Endothelial cell of umbilical vein (primary cell): ENCODE measurements at regions of chr2 and their contacts with region 1.

Region 1: GRCh38 chr2:69816923-69817542 is 12.4 kb upstream of the GMCL1 start:
- DNase-seq: peak; percentile 88
- H3K4me3 ChIP-seq: no peak overlapping the region
- H3K27ac ChIP-seq: no peak overlapping the region
- H3K4me1 ChIP-seq: peaks cover 28% of the 10 kb centered on the region
- H3K27me3 ChIP-seq: no peaks in the 10 kb centered on the region
- CTCF ChIP-seq: peak; percentile 71 to 72
- POLR2A ChIP-seq: no peak

Region 2: GRCh38 chr2:69559442-69560146 is 257.4 kb before region 1 on chr2:
- CTCF ChIA-PET with region 1: interaction called, 15 read pairs
- POLR2A ChIA-PET with region 1: no interaction called
- dilution Hi-C with region 1: no loop called
- intact Hi-C with region 1: loop called (anchors 5 kb)
- DNase-seq: peak; percentile 69
- H3K4me3 ChIP-seq: no peak overlapping the region
- H3K27ac ChIP-seq: no peak overlapping the region
- H3K4me1 ChIP-seq: peaks cover 21% of the 10 kb centered on the region
- H3K27me3 ChIP-seq: no peaks in the 10 kb centered on the region
- CTCF ChIP-seq: peak; percentile 50 to 51
- POLR2A ChIP-seq: no peak

Region 3: DNA sequence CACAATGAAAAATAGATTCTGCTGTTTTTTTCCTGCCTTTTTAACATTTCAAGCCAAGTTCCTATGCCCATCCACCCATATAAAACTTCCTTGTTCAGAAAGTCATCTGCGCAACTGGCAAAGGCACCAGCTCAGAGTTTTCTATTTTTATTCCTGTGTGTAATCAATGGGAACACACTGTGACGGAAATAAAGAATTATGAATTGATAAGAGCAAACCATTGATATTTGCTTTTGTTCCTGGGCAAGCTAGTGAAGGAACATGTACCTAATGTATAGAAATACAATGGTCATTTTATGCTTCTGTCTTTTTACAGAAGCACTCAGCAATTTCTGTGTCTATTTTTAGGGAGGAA is 142.7 kb before region 1 on chr2:
- CTCF ChIA-PET with region 1: no interaction called
- POLR2A ChIA-PET with region 1: no interaction called
- dilution Hi-C with region 1: no loop called
- intact Hi-C with region 1: no loop called
- DNase-seq: peak; percentile 51
- H3K4me3 ChIP-seq: no peak overlapping the region
- H3K27ac ChIP-seq: peak overlapping the region; percentile 15
- H3K4me1 ChIP-seq: peaks cover 20% of the 10 kb centered on the region
- H3K27me3 ChIP-seq: no peaks in the 10 kb centered on the region
- CTCF ChIP-seq: no peak
- POLR2A ChIP-seq: no peak

Region 4: GRCh38 chr2:69741619-69742466 is 75.2 kb before region 1 on chr2 and contains the start of gene ANXA4:
- CTCF ChIA-PET with region 1: interaction called, 90 read pairs
- POLR2A ChIA-PET with region 1: no interaction called
- dilution Hi-C with region 1: no loop called
- intact Hi-C with region 1: loop called (anchors 1 kb)
- DNase-seq: peak; percentile 48
- H3K4me3 ChIP-seq: peak within 1 kb of the TSS; percentile 56 to 79 (median 75)
- H3K27ac ChIP-seq: peak within 1 kb of the TSS; percentile 30
- H3K4me1 ChIP-seq: peaks cover 9% of the 10 kb centered on the region
- H3K27me3 ChIP-seq: no peaks in the 10 kb centered on the region
- CTCF ChIP-seq: no peak
- POLR2A ChIP-seq: no peak
- total RNA-seq, gene ANXA4: 70.8 and 79.6 TPM in 2 replicates

Region 5: GRCh38 chr2:69767034-69767433 is 50.0 kb before region 1 on chr2:
- CTCF ChIA-PET with region 1: interaction called, 21 read pairs
- POLR2A ChIA-PET with region 1: no interaction called
- dilution Hi-C with region 1: no loop called
- intact Hi-C with region 1: no loop called
- DNase-seq: no peak
- H3K4me3 ChIP-seq: no peak overlapping the region
- H3K27ac ChIP-seq: no peak overlapping the region
- H3K4me1 ChIP-seq: peaks cover 5% of the 10 kb centered on the region
- H3K27me3 ChIP-seq: no peaks in the 10 kb centered on the region
- CTCF ChIP-seq: no peak
- POLR2A ChIP-seq: no peak

Region 6: DNA sequence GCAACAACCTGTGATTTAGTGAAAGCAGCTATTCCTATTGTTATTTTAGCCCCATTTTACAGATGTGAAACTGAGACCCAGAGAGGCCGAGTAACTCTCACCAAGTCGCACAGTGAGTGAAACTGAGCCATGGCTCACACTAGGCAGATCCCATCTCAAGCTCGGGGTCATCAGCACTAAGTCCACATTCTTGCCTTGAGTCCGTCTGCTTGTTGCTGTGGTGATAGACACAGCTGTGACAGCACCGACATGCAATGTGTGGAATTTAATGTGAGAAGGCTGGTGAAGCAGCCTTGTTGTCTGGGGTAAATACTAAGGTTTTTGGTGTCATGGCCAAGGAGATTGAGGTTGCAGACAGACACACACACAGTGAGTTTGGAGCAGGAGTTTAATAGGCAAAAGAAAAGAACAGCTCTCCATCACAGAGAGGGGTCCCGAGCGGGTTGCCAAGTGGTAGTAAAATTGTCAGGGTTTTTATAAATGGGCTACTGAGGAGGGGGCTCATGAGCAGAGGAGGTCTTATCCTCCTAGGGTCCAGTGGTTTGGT is 27.8 kb before region 1 on chr2:
- CTCF ChIA-PET with region 1: interaction called, 25 read pairs
- POLR2A ChIA-PET with region 1: no interaction called
- dilution Hi-C with region 1: no loop called
- intact Hi-C with region 1: no loop called
- DNase-seq: no peak
- H3K4me3 ChIP-seq: no peak overlapping the region
- H3K27ac ChIP-seq: no peak overlapping the region
- H3K4me1 ChIP-seq: no peaks in the 10 kb centered on the region
- H3K27me3 ChIP-seq: no peaks in the 10 kb centered on the region
- CTCF ChIP-seq: no peak
- POLR2A ChIP-seq: no peak

Region 7: GRCh38 chr2:69829256-69830046 is 12.4 kb after region 1 on chr2 and contains the start of gene GMCL1:
- CTCF ChIA-PET with region 1: interaction called, 70 read pairs
- POLR2A ChIA-PET with region 1: no interaction called
- dilution Hi-C with region 1: no loop called
- intact Hi-C with region 1: no loop called
- DNase-seq: peak; percentile 98
- H3K4me3 ChIP-seq: peak within 1 kb of the TSS; percentile 43 to 70 (median 66)
- H3K27ac ChIP-seq: peak within 1 kb of the TSS; percentile 81
- H3K4me1 ChIP-seq: peaks cover 7% of the 10 kb centered on the region
- H3K27me3 ChIP-seq: no peaks in the 10 kb centered on the region
- CTCF ChIP-seq: no peak
- POLR2A ChIP-seq: peak; percentile 90
- total RNA-seq, gene GMCL1: 13.0 and 14.6 TPM in 2 replicates

Region 8: DNA sequence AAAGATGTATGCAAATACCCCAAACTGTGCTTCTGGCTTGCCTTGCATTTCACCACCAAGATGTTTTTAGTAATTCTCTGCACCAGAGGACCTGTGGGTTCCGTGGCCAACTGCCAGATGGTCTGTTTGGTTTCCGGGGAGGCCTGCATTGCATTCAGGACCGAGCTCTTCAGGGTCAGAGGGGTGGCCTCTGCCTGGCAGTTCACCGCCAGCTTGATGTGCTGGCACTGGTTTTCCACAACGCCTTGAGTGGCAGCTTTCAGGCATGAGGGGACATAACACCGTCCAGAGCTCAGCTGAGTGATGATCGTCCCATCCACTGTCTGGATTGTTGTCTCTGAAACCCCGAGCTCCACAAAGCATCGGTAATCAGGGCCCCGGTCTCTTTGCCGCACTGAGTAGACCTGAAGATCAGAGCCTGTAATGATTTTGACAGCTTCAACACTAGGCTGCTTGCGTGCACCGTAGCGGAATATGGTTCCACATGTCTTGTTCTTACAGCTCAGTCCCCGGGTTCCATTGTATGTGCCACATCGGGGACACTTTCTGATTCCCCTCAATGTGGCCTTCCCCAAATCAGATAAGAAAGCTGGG is 364.4 kb after region 1 on chr2:
- CTCF ChIA-PET with region 1: no interaction called
- POLR2A ChIA-PET with region 1: no interaction called
- dilution Hi-C with region 1: no loop called
- intact Hi-C with region 1: no loop called
- DNase-seq: no peak
- H3K4me3 ChIP-seq: no peak overlapping the region
- H3K27ac ChIP-seq: no peak overlapping the region
- H3K4me1 ChIP-seq: no peaks in the 10 kb centered on the region
- H3K27me3 ChIP-seq: no peaks in the 10 kb centered on the region
- CTCF ChIP-seq: no peak
- POLR2A ChIP-seq: no peak